IMR-90 (cell line): ENCODE measurements at regions of chr10 and their contacts with region 1.

Region 1: GRCh38 chr10:128011175-128011979 is 104.5 kb downstream of the PTPRE start:
- DNase-seq: peak; percentile 44
- ATAC-seq: peak; percentile 100
- H3K4me3 ChIP-seq: no peak overlapping the region
- H3K27ac ChIP-seq: no peak overlapping the region
- H3K4me1 ChIP-seq: no peaks in the 10 kb centered on the region; the same call in 1 of the 2 replicates
- H3K27me3 ChIP-seq: peaks cover 3% of the 10 kb centered on the region; the same call in 1 of the 2 replicates
- CTCF ChIP-seq: peak; percentile 96
- POLR2A ChIP-seq: no peak
- RAD21 ChIP-seq: peak; percentile 91

Region 2: DNA sequence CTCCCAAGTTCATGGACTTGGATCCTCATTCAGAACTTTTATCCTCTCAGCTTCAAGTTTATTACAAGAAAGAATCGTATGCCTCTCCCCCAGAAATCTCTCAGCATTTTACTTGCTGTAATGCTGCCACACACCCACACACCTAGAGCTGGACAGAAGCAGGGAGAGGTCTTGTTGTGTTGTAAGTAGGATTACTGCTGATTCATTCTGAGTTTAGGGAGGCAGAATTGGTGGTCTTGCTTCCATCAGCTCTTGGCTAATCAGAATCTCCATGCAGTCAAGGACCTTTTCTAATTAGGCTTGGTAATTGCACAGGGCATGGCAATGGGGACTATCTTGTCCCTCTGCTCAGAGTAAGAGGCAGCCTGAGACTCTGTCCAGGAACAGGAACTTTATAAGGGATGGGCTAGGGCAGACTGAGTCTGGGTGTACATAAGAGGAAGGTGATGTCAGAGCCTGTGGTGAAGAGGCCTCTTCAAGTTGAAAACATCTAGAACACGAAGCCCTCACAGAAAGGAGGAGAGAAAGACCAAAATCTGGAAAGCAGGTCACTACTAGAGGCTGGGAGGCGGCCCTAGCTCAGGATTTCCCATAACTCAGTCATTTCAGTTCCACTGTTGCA is 111.5 kb before region 1 on chr10:
- CTCF ChIA-PET with region 1: interaction called, 24 read pairs
- POLR2A ChIA-PET with region 1: no interaction called
- dilution Hi-C with region 1: no loop called
- in situ Hi-C with region 1: loop called (anchors 5 kb)
- intact Hi-C with region 1: no loop called
- DNase-seq: no peak
- ATAC-seq: no peak
- H3K4me3 ChIP-seq: no peak overlapping the region
- H3K27ac ChIP-seq: no peak overlapping the region
- H3K4me1 ChIP-seq: no peaks in the 10 kb centered on the region
- H3K27me3 ChIP-seq: no peaks in the 10 kb centered on the region; the same call in 1 of the 2 replicates
- CTCF ChIP-seq: no peak
- POLR2A ChIP-seq: no peak
- RAD21 ChIP-seq: no peak

Region 3: DNA sequence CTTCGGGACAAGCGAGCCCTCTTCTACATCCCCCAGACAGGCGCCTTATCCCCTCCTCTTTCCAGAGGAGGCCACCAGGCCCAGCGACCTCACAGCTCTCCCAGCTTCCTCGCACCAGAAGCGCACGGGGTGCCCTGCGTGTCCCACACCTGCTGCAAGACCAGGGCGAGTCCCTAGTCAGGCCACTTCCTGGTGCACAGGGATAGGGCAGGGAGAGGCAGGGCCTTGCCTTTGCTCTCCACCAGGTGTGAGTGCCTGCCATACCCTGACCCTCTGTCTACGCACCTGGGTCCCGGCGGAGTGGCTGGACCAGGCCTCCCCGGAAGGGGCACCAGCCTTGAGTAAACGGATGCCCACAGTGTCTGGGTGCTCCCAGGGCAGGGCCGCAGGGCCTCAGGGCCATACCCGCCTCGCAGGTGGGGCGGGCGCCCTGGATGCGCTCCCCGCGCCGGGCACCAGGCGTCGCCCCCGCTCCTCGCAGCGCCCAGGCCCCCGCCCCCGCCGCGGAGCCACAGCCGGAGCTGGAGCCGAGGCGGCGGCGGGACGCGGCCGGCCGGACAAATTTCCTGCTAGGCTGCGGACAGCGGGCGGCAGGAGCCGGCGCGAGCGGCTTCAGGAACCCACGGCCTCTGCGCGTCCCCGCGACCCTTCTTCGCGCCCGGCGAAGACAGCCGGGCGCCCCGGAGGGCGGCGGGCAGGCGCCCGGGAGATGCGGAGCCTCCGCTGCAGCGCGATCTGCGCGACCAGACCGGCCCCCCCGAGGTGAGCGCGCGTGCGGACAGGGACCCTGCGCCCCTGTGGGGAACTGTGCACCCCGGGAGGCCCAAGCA is 104.6 kb before region 1 on chr10 and contains the start of gene PTPRE:
- CTCF ChIA-PET with region 1: interaction called, 24 read pairs
- POLR2A ChIA-PET with region 1: no interaction called
- dilution Hi-C with region 1: no loop called
- in situ Hi-C with region 1: loop called (anchors 5 kb)
- intact Hi-C with region 1: loop called (anchors 1 kb)
- DNase-seq: peak; percentile 24
- ATAC-seq: peak; percentile 94
- H3K4me3 ChIP-seq: peak within 1 kb of the TSS; percentile 42
- H3K27ac ChIP-seq: no peak within 1 kb of the TSS
- H3K4me1 ChIP-seq: peaks cover 4% of the 10 kb centered on the region; the same call in 1 of the 2 replicates
- H3K27me3 ChIP-seq: peaks cover 3% of the 10 kb centered on the region; the same call in 1 of the 2 replicates
- CTCF ChIP-seq: peak; percentile 70
- POLR2A ChIP-seq: no peak
- RAD21 ChIP-seq: peak; percentile 76
- total RNA-seq, gene PTPRE: 0.54 and 0.56 TPM in 2 replicates

Region 4: GRCh38 chr10:128069351-128070051 is 58.1 kb after region 1 on chr10:
- CTCF ChIA-PET with region 1: interaction called, 7 read pairs
- POLR2A ChIA-PET with region 1: no interaction called
- dilution Hi-C with region 1: no loop called
- in situ Hi-C with region 1: no loop called
- intact Hi-C with region 1: loop called (anchors 2 kb)
- DNase-seq: peak; percentile 66
- ATAC-seq: peak; percentile 89
- H3K4me3 ChIP-seq: no peak overlapping the region
- H3K27ac ChIP-seq: no peak overlapping the region
- H3K4me1 ChIP-seq: peaks cover 3% of the 10 kb centered on the region
- H3K27me3 ChIP-seq: no peaks in the 10 kb centered on the region; the same call in 1 of the 2 replicates
- CTCF ChIP-seq: peak; percentile 89
- POLR2A ChIP-seq: no peak
- RAD21 ChIP-seq: peak; percentile 81